Activated CD8-positive, alpha-beta T cell treated with anti-CD3 and anti-CD28 coated beads, Interleukin-2, amount 10 ng/mL, durations not matched to agents 7 days and 5 days (primary cell): ENCODE measurements at regions of chr2 and their contacts with region 1.

Region 1: DNA sequence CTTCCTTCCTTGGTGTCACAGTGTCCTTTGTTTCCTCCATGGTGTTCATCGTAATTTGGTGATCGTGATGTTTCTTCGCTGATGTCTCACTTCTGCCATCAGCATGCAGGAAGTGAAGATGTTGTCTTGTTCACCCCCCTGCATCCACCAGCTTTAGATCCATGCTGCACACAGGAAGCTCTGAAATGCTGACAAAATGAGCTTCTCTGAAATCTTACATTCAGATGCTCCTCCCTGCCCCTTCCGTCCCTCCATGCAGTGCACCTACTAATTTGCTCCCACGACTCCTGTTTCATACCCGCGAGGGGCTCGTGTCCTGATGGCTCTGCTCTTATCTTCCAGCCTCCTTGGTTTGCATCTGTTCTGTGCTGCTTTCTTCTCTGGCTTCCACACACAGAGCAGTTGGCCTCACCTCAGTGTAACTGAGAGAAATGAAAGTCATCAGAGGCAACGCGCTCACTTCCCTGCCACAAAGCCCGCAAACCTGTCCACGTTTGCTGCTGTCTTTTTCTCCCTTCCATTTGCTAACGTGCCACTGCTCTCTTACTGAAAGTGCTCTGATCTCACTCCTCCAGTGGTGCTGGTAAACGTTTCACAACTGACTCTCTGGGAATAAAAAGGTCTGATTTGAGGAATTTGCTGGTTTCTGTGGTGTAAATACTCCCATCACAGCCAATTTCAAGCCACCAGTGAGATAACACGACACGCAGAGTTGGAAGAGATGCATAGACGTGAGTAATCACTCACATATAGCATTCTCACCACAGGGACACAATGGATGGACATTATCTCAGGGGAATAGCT is 41.0 kb upstream of the MGAT4A start:
- DNase-seq: peak; percentile 84
- ATAC-seq: peak; percentile 71
- H3K4me3 Mint-ChIP-seq: peak overlapping the region; percentile 94
- H3K27ac Mint-ChIP-seq: peak overlapping the region; percentile 97
- H3K4me1 Mint-ChIP-seq: peaks cover 71% of the 10 kb centered on the region
- H3K27me3 Mint-ChIP-seq: no peaks in the 10 kb centered on the region

Region 2: GRCh38 chr2:98568881-98569793 is 202.8 kb before region 1 on chr2:
- CTCF ChIA-PET with region 1: no interaction called
- POLR2A ChIA-PET with region 1: no interaction called
- DNase-seq: peak; percentile 73
- ATAC-seq: peak; percentile 76
- H3K4me3 Mint-ChIP-seq: no peak overlapping the region
- H3K27ac Mint-ChIP-seq: peak overlapping the region; percentile 69
- H3K4me1 Mint-ChIP-seq: peaks cover 15% of the 10 kb centered on the region
- H3K27me3 Mint-ChIP-seq: no peaks in the 10 kb centered on the region

Region 3: GRCh38 chr2:98664327-98664726 is 107.6 kb before region 1 on chr2:
- CTCF ChIA-PET with region 1: interaction called, 5 read pairs
- POLR2A ChIA-PET with region 1: interaction called, 15 read pairs
- DNase-seq: peak; percentile 78
- ATAC-seq: peak; percentile 72
- H3K4me3 Mint-ChIP-seq: peak overlapping the region; percentile 65
- H3K27ac Mint-ChIP-seq: peak overlapping the region; percentile 93
- H3K4me1 Mint-ChIP-seq: peaks cover 68% of the 10 kb centered on the region
- H3K27me3 Mint-ChIP-seq: no peaks in the 10 kb centered on the region

Region 4: GRCh38 chr2:98757904-98758421 is 14.0 kb before region 1 on chr2:
- CTCF ChIA-PET with region 1: interaction called, 8 read pairs
- POLR2A ChIA-PET with region 1: interaction called, 20 read pairs
- DNase-seq: peak; percentile 75
- ATAC-seq: peak; percentile 80
- H3K4me3 Mint-ChIP-seq: peak overlapping the region; percentile 71
- H3K27ac Mint-ChIP-seq: peak overlapping the region; percentile 95
- H3K4me1 Mint-ChIP-seq: peaks cover 56% of the 10 kb centered on the region
- H3K27me3 Mint-ChIP-seq: no peaks in the 10 kb centered on the region

Region 5: GRCh38 chr2:98822301-98823164 is 50.6 kb after region 1 on chr2:
- CTCF ChIA-PET with region 1: interaction called, 12 read pairs
- POLR2A ChIA-PET with region 1: interaction called, 15 read pairs
- DNase-seq: peak; percentile 69
- ATAC-seq: peak; percentile 93
- H3K4me3 Mint-ChIP-seq: peak overlapping the region; percentile 57
- H3K27ac Mint-ChIP-seq: no peak overlapping the region
- H3K4me1 Mint-ChIP-seq: peaks cover 17% of the 10 kb centered on the region
- H3K27me3 Mint-ChIP-seq: peaks cover 3% of the 10 kb centered on the region